ENCODE measurements at regions of chr3 and their contacts with region 1.

Region 1: DNA sequence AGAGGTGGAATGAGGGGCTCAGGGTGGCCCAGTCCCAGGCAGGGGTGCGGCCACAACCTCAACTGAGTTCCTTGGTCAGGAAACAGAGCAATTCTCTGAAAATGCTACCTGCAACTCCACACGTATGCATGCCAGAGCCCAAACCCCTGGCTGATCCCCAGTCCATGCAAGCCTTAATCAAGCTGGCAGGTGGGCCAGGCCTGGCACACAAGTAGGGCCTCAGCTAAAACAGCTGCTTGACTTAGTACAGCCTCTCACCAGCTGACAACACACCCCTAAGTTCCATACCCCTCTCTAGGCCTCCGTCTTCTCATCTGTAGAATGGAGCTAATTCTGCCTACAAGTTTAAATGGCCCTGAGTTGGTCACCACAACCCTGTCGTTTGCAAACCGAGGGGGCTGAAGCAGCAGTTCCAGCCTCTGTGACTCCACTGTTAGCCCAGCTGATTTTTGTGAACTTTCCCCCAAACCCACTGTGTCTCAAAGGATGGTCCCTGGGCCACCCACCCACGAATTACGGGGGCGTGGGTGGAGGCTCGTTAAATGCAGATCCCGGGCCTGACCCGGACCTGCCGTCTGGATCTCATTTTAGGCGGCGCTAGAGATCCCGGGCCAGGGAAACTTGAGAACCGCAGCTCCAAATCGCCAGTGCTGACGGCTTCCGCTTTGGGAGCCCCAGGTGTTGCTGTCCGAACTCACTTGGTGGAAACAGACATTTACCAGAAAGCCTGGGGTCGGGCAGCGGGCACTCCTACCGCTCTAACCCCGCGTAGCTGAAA is 927 bp downstream of the CHDH start:
- DNase-seq: peak; percentile 46 to 79
- H3K4me3 ChIP-seq: peak overlapping the region; percentile 47 to 79 (median 72)
- H3K27ac ChIP-seq: 0 out of 2 replicates have a peak overlapping the region, but pooled peaks have one; percentile 0
- H3K4me1 ChIP-seq: peaks cover 19 to 30% (median 22%) of the 10 kb centered on the region in 4 experiments
- H3K27me3 ChIP-seq: peaks cover 3 to 16% (median 9%) of the 10 kb centered on the region in 4 experiments
- CTCF ChIP-seq: peak; percentile 9 to 49 (median 30); a peak in 3 of 4 replicates
- EP300 ChIP-seq: no peak
- POLR2A ChIP-seq: peak in 1 of 2 experiments; percentile 45; a peak in 2 of 3 replicates
- RAD21 ChIP-seq: peak in 1 of 2 experiments; percentile 13; a peak in 1 of 4 replicates

Region 2: DNA sequence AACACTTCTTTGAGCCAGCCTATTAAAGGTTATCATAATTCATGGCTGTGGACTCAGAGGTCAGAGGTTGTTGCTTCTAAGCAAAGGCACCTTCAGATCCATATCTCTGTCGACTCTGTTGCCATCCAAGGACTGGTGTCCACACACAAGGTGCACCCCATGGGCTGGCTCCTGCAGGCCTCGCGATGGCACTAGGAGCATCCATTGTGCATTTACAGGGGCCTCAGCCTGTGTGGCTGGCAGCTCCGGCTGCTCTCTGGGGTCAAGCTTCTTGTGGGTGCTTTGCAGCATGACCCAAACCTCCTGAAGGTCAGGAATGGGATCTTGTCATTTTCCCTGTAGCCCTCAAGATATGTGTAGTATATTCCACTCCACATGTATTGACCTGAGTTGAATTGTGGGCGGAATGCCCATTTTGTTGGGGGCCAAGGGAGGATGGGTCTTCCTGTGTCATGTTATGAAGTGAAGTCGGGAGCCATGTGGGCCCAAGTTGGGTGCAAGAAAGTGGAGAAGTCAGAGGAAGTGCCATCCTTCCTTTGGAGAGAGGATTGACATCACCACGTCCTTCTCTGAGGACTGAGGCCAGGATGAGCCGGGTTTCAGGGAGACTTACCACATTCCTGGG is 42.9 kb before region 1 on chr3:
- CTCF ChIA-PET with region 1: no interaction called
- POLR2A ChIA-PET with region 1: no interaction called
- DNase-seq: no peak
- H3K4me3 ChIP-seq: no peak overlapping the region
- H3K27ac ChIP-seq: no peak overlapping the region
- H3K4me1 ChIP-seq: peaks cover 0 to 7% (median 0%) of the 10 kb centered on the region in 4 experiments; a peak in 3 of 7 replicates
- H3K27me3 ChIP-seq: no peaks in the 10 kb centered on the region; a peak in 1 of 7 replicates
- CTCF ChIP-seq: no peak
- EP300 ChIP-seq: no peak
- POLR2A ChIP-seq: no peak
- RAD21 ChIP-seq: no peak

Region 3: DNA sequence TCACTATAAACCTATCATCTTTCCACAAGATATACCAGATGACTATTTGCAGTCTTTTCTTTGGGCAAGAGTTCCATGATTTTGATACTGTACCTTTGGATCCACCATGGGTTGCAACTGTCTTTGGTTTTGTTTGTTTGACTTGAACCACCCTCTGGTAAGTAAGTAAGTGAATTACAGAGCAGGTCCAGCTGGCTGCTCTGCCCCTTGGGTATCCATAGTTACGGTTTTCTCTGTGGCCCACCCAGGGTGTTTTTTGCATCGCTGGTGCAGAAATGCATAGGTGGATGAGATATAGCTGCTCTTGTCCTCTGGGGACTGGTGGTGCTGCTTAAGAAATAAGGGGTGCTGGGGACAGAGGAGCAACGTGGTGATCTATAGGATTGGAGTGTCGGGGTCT is 32.9 kb before region 1 on chr3:
- CTCF ChIA-PET with region 1: no interaction called
- POLR2A ChIA-PET with region 1: no interaction called
- DNase-seq: no peak
- H3K4me3 ChIP-seq: no peak overlapping the region
- H3K27ac ChIP-seq: no peak overlapping the region
- H3K4me1 ChIP-seq: no peaks in the 10 kb centered on the region; a peak in 1 of 7 replicates
- H3K27me3 ChIP-seq: no peaks in the 10 kb centered on the region
- CTCF ChIP-seq: peak in 2 of 3 experiments; percentile 25 to 52; a peak in 3 of 4 replicates
- EP300 ChIP-seq: no peak
- POLR2A ChIP-seq: no peak
- RAD21 ChIP-seq: peak; percentile 42 to 57

Region 4: GRCh38 chr3:53834429-53835095 is 10.7 kb before region 1 on chr3:
- CTCF ChIA-PET with region 1: interaction called, 23 read pairs
- POLR2A ChIA-PET with region 1: interaction called, 3 read pairs
- DNase-seq: no peak
- H3K4me3 ChIP-seq: no peak overlapping the region
- H3K27ac ChIP-seq: no peak overlapping the region
- H3K4me1 ChIP-seq: no peaks in the 10 kb centered on the region
- H3K27me3 ChIP-seq: no peaks in the 10 kb centered on the region
- CTCF ChIP-seq: no peak
- EP300 ChIP-seq: no peak
- POLR2A ChIP-seq: no peak
- RAD21 ChIP-seq: no peak

Measured in H1 (cell line).